Heart right ventricle (tissue), 16 donors: ENCODE measurements at regions of chr12 and their contacts with region 1.

Region 1: DNA sequence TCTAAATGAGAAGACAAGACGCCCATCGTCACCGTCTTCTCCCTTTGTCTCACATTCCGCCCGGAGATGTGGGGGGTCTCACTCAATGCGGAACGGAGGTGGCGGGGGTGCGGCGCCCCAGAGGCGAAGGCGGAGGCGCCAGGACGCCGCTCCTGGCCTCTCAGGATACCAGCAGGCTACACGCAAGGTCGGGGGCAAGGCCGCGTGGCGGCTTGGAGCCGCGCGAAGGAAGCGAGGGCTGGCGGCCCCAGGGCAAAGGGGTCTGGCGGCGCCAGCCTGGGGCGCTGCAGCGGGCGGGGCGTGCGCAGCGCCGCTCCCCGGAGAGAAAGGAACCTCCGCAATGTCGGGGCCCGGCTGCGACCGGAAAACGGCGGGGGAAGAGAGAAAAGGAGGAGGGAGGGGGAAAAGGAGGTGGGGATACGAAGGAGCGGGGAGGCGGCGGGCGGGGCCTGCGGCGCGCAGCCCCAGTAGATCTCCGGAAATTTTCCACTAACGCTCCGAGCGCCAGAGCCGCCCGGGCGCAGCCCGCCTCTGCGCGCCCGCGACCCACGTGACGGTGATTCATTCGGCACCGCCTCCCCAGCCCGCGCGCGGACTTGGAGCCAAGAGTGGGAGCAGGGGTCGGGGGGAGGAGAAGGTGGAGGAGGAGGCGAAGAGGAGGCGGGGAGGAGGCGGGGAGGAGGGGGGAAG is 10.5 kb upstream of the SLC38A2 start:
- DNase-seq: peak; percentile 97 to 98
- ATAC-seq: peak; percentile 92 to 97 (median 94)
- H3K4me3 ChIP-seq: peak overlapping the region; percentile 32 to 89 (median 70)
- H3K27ac ChIP-seq: peak overlapping the region; percentile 94 to 100 (median 99)
- H3K4me1 ChIP-seq: peaks cover 0 to 55% (median 46%) of the 10 kb centered on the region in 9 donors
- H3K27me3 ChIP-seq: no peaks in the 10 kb centered on the region
- CTCF ChIP-seq: peak in 2 of 9 donors; percentile 39 to 53

Region 2: DNA sequence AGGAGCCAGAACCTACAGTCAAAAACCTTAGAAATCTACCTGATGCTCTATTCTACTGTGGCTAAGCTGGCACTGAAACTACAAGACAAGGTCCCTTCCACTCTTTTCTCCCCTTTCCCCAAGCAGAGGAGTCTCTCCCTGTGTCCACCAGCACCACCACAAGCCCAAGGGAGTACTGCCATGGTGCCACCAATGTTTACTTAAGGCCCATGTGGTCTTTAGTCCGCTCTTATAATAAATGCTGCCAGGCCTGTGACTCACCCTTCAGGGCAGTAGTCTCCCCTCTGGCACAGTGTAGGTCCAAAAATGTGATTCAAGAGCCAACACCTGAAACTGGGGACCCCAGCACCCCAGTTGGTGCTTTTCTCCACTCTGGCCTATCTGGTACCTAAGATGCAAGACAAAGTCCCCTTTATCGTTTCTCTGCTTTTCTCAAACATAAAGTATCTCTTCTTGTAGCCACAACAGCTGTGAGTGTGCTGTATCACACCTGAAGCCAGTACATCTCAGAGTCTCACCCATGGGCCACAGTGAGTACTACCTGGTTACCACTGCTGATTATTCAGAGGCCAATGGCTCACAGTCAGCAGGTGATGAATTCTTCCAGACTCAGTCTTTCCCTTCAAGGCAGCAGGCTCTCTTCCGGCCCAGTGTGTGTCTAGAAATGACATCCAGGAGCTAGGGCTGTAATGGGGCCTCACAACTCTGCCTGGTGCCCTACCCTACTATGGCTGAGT is 39.8 kb before region 1 on chr12:
- intact Hi-C with region 1: no loop called
- DNase-seq: no peak
- ATAC-seq: peak in 2 of 8 donors; percentile 17 to 29
- H3K4me3 ChIP-seq: no peak overlapping the region
- H3K27ac ChIP-seq: no peak overlapping the region
- H3K4me1 ChIP-seq: peaks cover 0 to 8% (median 0%) of the 10 kb centered on the region in 9 donors
- H3K27me3 ChIP-seq: no peaks in the 10 kb centered on the region
- CTCF ChIP-seq: no peak

Region 3: GRCh38 chr12:46372544-46373110 is 10.5 kb before region 1 on chr12 and contains the start of gene SLC38A2:
- intact Hi-C with region 1: loop called in 2 of 10 experiments (anchors 1 kb)
- DNase-seq: peak; percentile 97 to 99
- ATAC-seq: peak; percentile 95 to 98 (median 96)
- H3K4me3 ChIP-seq: peak within 1 kb of the TSS; percentile 73 to 98 (median 89)
- H3K27ac ChIP-seq: peak within 1 kb of the TSS; percentile 94 to 99 (median 98)
- H3K4me1 ChIP-seq: peaks cover 15 to 45% (median 38%) of the 10 kb centered on the region in 9 donors
- H3K27me3 ChIP-seq: no peaks in the 10 kb centered on the region
- CTCF ChIP-seq: no peak
- total RNA-seq, gene SLC38A2: 82.1 to 203 (median 110) TPM

Region 4: DNA sequence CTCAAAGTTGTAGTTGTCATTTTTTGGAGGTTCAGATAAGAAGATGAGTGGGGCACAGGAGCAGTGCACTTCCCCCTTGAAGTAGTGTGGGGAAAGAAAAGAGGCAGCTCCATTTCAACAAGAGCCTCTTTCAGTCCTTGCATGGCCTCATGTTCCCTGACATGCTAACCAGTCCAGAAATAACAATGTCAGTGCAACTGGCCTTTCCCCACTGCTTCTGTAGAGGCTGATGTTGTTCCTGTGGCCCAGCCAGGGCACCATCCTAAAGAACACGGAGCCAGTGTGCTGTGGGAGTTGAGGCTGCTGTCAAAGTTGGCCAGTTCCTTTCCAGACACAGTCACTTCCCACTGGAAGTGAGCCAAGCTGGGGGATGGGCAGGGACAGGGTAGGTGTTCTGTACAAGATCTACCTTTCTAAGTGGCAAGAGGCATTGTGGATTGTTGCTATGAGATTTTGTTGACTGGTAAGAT is 67.2 kb after region 1 on chr12:
- intact Hi-C with region 1: loop called in 1 of 10 experiments (anchors 10 kb)
- DNase-seq: peak; percentile 67 to 68
- ATAC-seq: peak in 7 of 8 donors; percentile 68 to 94 (median 86)
- H3K4me3 ChIP-seq: no peak overlapping the region
- H3K27ac ChIP-seq: peak overlapping the region in 8 of 10 donors; percentile 14 to 62 (median 46)
- H3K4me1 ChIP-seq: peaks cover 9 to 38% (median 30%) of the 10 kb centered on the region in 9 donors
- H3K27me3 ChIP-seq: no peaks in the 10 kb centered on the region
- CTCF ChIP-seq: no peak

Region 5: GRCh38 chr12:46473634-46474329 is 90.7 kb after region 1 on chr12:
- intact Hi-C with region 1: loop called in 3 of 10 experiments (anchors 5 kb)
- DNase-seq: peak; percentile 41 to 74
- ATAC-seq: peak; percentile 74 to 95 (median 92)
- H3K4me3 ChIP-seq: peak overlapping the region in 1 of 10 donors; percentile 3
- H3K27ac ChIP-seq: peak overlapping the region; percentile 37 to 91 (median 86)
- H3K4me1 ChIP-seq: peaks cover 7 to 46% (median 29%) of the 10 kb centered on the region in 9 donors
- H3K27me3 ChIP-seq: no peaks in the 10 kb centered on the region
- CTCF ChIP-seq: no peak